Activated CD4-positive, alpha-beta T cell treated with anti-CD3 and anti-CD28 coated beads for 36 hours (primary cell): ENCODE measurements at regions of chr4 and their contacts with region 1.

Region 1: DNA sequence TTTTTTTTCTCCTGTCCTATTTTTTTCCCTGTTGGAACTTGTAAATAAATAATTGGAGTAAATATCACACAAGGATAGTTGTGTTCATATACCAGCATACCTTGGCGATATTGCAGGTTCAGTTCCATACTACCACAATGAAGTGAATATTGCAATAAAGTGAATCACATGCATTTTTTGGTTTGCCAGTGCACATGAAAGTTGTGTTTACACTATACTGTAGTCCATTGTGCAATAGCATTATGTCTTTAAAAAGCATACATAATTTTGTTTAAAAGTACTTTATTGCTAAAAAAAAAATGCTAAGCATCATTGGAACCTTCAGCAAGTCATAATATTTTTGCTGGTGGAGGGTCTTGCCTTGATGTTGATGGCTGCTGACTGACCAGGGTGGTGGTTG is 88.6 kb downstream of the GSTCD start:
- DNase-seq: no peak
- ATAC-seq: no peak
- H3K4me3 Mint-ChIP-seq: no peak overlapping the region
- H3K27ac Mint-ChIP-seq: no peak overlapping the region
- H3K4me1 Mint-ChIP-seq: no peaks in the 10 kb centered on the region
- H3K27me3 Mint-ChIP-seq: no peaks in the 10 kb centered on the region

Region 2: GRCh38 chr4:105784761-105785160 is 12.5 kb before region 1 on chr4:
- CTCF ChIA-PET with region 1: no interaction called
- POLR2A ChIA-PET with region 1: no interaction called
- intact Hi-C with region 1: loop called (anchors 1 kb)
- DNase-seq: no peak
- ATAC-seq: no peak
- H3K4me3 Mint-ChIP-seq: no peak overlapping the region
- H3K27ac Mint-ChIP-seq: no peak overlapping the region
- H3K4me1 Mint-ChIP-seq: no peaks in the 10 kb centered on the region
- H3K27me3 Mint-ChIP-seq: no peaks in the 10 kb centered on the region